Activated CD4-positive, alpha-beta T cell treated with anti-CD3 and anti-CD28 coated beads, Interleukin-2, amount 10 ng/mL, durations not matched to agents 24 days and 14 days (primary cell): ENCODE measurements at regions of chr2 and their contacts with region 1.

Region 1: DNA sequence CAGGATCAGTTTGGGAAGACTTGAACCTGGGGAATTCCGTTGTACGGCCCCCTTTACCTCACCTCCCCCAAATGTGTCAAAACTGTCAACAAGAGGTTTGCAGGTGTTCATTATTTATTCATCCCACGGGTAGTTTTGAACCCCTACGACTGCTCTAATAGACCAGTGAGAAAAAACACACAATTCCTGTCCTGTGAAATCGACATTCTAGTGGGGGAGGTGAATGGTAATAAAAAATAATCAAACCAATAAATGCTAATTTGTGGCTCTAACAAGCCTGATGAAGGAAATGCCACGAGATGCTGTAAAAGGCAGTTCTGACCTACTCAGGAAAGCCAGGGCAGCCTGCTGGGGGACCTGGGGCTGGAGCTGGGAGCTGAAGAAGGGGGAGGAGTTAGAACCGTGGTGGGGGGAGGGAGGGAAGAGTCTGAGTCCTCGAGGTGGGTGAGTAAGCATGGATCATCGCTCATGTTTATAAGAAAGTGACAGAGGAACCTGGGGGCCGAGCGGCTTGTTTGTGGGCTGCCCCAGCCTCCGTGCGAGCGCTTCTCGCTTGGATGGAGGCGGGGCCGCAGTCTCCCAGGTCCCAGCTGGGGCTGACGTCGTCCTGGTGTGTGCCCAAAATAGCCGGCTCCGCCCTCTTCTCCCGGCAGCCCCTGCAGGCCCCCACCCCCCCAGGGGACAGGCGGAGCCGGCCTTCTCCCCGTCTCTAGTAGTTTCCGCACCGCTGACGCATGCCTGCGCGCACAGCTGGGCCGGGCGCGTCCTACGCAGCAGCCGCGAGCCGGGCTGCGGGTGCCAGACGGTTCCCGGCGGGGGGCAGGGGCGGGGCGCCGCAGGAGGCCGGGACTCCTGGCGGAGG is at the start of gene DNAJB2:
- DNase-seq: peak; percentile 100
- H3K4me3 Mint-ChIP-seq: peak within 1 kb of the TSS; percentile 97
- H3K27ac Mint-ChIP-seq: peak within 1 kb of the TSS; percentile 96
- H3K4me1 Mint-ChIP-seq: peaks cover 42% of the 10 kb centered on the region
- H3K27me3 Mint-ChIP-seq: no peaks in the 10 kb centered on the region
- total RNA-seq, gene DNAJB2: 49.7 and 52.4 TPM in 2 replicates

Region 2: GRCh38 chr2:218995972-218996711 is 282.7 kb before region 1 on chr2:
- intact Hi-C with region 1: no loop called
- DNase-seq: peak; percentile 93
- H3K4me3 Mint-ChIP-seq: peak overlapping the region; percentile 34
- H3K27ac Mint-ChIP-seq: no peak overlapping the region
- H3K4me1 Mint-ChIP-seq: peaks cover 3% of the 10 kb centered on the region
- H3K27me3 Mint-ChIP-seq: peaks cover 81% of the 10 kb centered on the region

Region 3: DNA sequence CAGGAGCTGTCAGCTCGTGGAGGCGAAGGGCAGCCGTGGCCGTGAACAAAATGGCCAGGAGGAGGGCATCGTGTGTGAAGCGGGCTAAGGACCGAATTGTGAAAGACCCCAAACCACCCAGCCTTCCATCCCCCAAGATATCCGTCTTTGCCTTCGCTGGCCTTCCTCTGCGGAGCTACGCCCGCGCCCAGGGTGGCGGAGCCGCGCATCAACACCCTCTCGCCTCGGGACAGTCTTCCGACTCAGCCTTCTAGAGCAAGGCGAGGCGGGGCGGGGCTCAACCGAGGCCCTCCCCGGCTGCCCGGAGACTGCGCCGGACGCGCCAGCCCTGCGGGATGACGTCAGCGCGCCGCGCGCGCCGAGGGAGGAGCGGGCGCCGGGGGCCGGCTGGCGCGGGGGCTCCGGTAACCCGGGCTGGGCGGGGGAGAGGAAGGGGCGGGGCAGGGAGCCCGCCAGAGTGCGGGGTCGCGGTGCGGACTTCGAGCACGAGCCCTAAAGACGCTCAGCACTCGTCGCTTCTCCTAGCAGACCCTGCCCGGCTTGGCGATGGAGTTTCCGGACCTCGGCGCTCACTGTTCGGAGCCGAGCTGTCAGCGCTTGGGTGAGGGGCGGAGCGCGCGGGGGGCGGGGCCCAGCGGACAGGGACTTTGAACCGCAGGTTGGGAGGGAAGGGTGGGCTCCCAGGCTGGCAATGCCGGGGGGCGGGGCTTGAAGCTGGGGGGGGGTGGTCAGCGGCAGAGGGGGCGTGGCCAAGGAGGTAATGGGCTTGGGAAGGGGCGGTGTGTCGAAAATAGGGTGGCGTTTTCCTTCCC is 72.2 kb before region 1 on chr2 and contains the start of gene ZFAND2B:
- intact Hi-C with region 1: loop called (anchors 1 kb)
- DNase-seq: peak; percentile 99
- H3K4me3 Mint-ChIP-seq: peak within 1 kb of the TSS; percentile 83
- H3K27ac Mint-ChIP-seq: peak within 1 kb of the TSS; percentile 92
- H3K4me1 Mint-ChIP-seq: peaks cover 35% of the 10 kb centered on the region
- H3K27me3 Mint-ChIP-seq: no peaks in the 10 kb centered on the region
- total RNA-seq, gene ZFAND2B: 36.7 and 37.4 TPM in 2 replicates

Region 4: GRCh38 chr2:219229305-219230058 is 49.4 kb before region 1 on chr2 and contains the starts of genes ANKZF1 and ATG9A:
- intact Hi-C with region 1: loop called (anchors 1 kb)
- DNase-seq: peak; percentile 100
- H3K4me3 Mint-ChIP-seq: peak within 1 kb of the TSS; percentile 92
- H3K27ac Mint-ChIP-seq: peak within 1 kb of the TSS; percentile 98
- H3K4me1 Mint-ChIP-seq: peaks cover 43% of the 10 kb centered on the region
- H3K27me3 Mint-ChIP-seq: no peaks in the 10 kb centered on the region
- total RNA-seq, gene ANKZF1: 144 and 149 TPM in 2 replicates
- total RNA-seq, gene ATG9A: 61.6 and 67.2 TPM in 2 replicates

Region 5: DNA sequence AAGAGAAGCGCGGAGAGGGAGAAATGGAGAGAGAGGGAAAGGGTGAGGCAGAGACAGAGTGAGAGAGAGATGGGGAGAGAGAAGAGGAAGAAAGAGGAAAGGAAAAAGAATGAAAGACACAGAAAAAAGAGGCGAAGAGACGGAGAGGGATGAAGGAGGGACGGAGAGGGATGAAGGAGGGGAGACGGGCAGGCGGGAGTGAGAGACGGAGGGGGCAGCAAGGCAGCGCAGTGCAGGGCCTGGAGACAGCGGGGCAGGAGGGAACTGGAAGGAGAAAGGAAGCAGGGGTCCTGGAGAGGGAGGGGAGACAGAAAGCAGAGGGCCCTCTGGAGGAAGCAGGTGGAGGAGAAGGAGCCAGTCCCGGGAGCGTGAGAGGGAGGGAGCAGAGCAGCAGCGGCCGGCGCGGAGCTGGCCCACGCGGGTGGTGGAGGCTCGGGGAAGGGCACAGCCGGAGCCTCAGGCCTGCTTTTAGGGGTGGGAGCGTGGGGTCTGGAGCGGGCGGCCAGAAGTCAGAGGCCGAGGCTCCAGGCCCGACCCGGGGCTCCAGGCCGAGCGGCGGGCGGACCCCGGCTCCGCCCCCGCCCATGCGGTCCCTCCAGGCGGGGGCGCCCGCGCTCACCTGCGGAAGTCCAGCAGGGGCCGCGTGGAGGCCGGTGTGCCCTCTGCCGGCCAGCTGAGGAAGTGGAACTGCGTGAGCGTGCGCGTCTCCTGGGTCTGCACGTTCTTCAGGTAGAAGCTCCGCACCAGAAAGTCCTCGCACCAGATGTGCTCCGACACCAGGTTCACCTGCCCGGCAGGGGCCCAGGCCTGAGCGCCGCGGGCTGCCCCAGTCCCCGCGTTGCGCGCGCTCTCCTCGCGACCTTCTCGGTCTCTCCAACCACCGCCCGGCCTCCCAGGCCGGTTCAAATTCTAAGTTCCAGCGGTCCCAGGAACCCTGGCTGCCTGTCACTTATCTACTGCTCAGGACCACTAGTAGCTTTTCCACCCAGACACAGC is 15.8 kb after region 1 on chr2:
- intact Hi-C with region 1: loop called (anchors 1 kb)
- DNase-seq: peak; percentile 97
- H3K4me3 Mint-ChIP-seq: peak overlapping the region; percentile 84
- H3K27ac Mint-ChIP-seq: peak overlapping the region; percentile 97
- H3K4me1 Mint-ChIP-seq: peaks cover 17% of the 10 kb centered on the region
- H3K27me3 Mint-ChIP-seq: peaks cover 6% of the 10 kb centered on the region

Region 6: GRCh38 chr2:219543601-219544358 is 264.9 kb after region 1 on chr2 and contains the starts of genes CHPF and TMEM198:
- intact Hi-C with region 1: loop called (anchors 5 kb)
- DNase-seq: peak; percentile 99
- H3K4me3 Mint-ChIP-seq: peak within 1 kb of the TSS; percentile 89
- H3K27ac Mint-ChIP-seq: peak within 1 kb of the TSS; percentile 75
- H3K4me1 Mint-ChIP-seq: peaks cover 17% of the 10 kb centered on the region
- H3K27me3 Mint-ChIP-seq: peaks cover 18% of the 10 kb centered on the region
- total RNA-seq, gene CHPF: 37.8 and 38.3 TPM in 2 replicates
- total RNA-seq, gene TMEM198: 3.1 and 3.4 TPM in 2 replicates